ENCODE measurements at regions of chr11 and their contacts with region 1.

Region 1: GRCh38 chr11:12888525-12889158 is 120.5 kb upstream of the RASSF10 start:
- DNase-seq: peak; percentile 79 to 83
- H3K4me3 ChIP-seq: no peak overlapping the region
- H3K27ac ChIP-seq: peak overlapping the region; percentile 68 to 77
- H3K4me1 ChIP-seq: peaks cover 0 to under 1% of the 10 kb centered on the region in 2 donors
- H3K27me3 ChIP-seq: no peaks in the 10 kb centered on the region
- CTCF ChIP-seq: peak; percentile 70 to 81 (median 78)
- POLR2A ChIP-seq: no peak

Region 2: GRCh38 chr11:12673924-12674570 is 214.6 kb before region 1 on chr11 and contains the start of gene TEAD1:
- intact Hi-C with region 1: loop called (anchors 10 kb)
- DNase-seq: peak; percentile 94 to 97
- H3K4me3 ChIP-seq: peak within 1 kb of the TSS; percentile 60 to 98 (median 83)
- H3K27ac ChIP-seq: peak within 1 kb of the TSS; percentile 98
- H3K4me1 ChIP-seq: no peaks in the 10 kb centered on the region
- H3K27me3 ChIP-seq: no peaks in the 10 kb centered on the region
- CTCF ChIP-seq: no peak
- POLR2A ChIP-seq: peak; percentile 73
- total RNA-seq, gene TEAD1: 67.8 to 110 (median 80.1) TPM

Region 3: GRCh38 chr11:12871788-12872321 is 16.8 kb before region 1 on chr11:
- intact Hi-C with region 1: no loop called
- DNase-seq: no peak
- H3K4me3 ChIP-seq: no peak overlapping the region
- H3K27ac ChIP-seq: no peak overlapping the region
- H3K4me1 ChIP-seq: no peaks in the 10 kb centered on the region
- H3K27me3 ChIP-seq: no peaks in the 10 kb centered on the region
- CTCF ChIP-seq: no peak
- POLR2A ChIP-seq: no peak